Caco-2 (cell line): ENCODE measurements at regions of chr2 and their contacts with region 1.

Region 1: GRCh38 chr2:86440631-86441391 is at the start of gene KDM3A:
- DNase-seq: peak; percentile 100
- H3K4me3 ChIP-seq: peak within 1 kb of the TSS; percentile 99
- H3K4me3 Mint-ChIP-seq: peak within 1 kb of the TSS; percentile 83
- H3K27ac Mint-ChIP-seq: peak within 1 kb of the TSS; percentile 96
- H3K4me1 ChIP-seq: no peaks in the 10 kb centered on the region
- H3K4me1 Mint-ChIP-seq: peaks cover 18% of the 10 kb centered on the region
- H3K27me3 ChIP-seq: no peaks in the 10 kb centered on the region
- H3K27me3 Mint-ChIP-seq: peaks cover 8% of the 10 kb centered on the region
- CTCF ChIP-seq: no peak
- total RNA-seq, gene KDM3A: 47.4 and 52.4 TPM in 2 replicates

Region 2: GRCh38 chr2:86195055-86195807 is 245.6 kb before region 1 on chr2 and contains the start of gene IMMT:
- CTCF ChIA-PET with region 1: no interaction called
- POLR2A ChIA-PET with region 1: interaction called, 9 read pairs
- intact Hi-C with region 1: loop called (anchors 10 kb)
- DNase-seq: peak; percentile 98
- H3K4me3 ChIP-seq: peak within 1 kb of the TSS; percentile 68
- H3K4me3 Mint-ChIP-seq: peak within 1 kb of the TSS; percentile 84
- H3K27ac Mint-ChIP-seq: peak within 1 kb of the TSS; percentile 81
- H3K4me1 ChIP-seq: peaks cover 9% of the 10 kb centered on the region; the same call in 1 of the 2 replicates
- H3K4me1 Mint-ChIP-seq: peaks cover 27% of the 10 kb centered on the region
- H3K27me3 ChIP-seq: no peaks in the 10 kb centered on the region
- H3K27me3 Mint-ChIP-seq: no peaks in the 10 kb centered on the region
- CTCF ChIP-seq: no peak
- total RNA-seq, gene IMMT: 125 and 129 TPM in 2 replicates

Region 3: GRCh38 chr2:86562922-86563649 is 122.3 kb after region 1 on chr2 and contains the start of gene CHMP3:
- CTCF ChIA-PET with region 1: no interaction called
- POLR2A ChIA-PET with region 1: interaction called, 6 read pairs
- intact Hi-C with region 1: loop called (anchors 1 kb)
- DNase-seq: peak; percentile 98
- H3K4me3 ChIP-seq: peak within 1 kb of the TSS; percentile 81
- H3K4me3 Mint-ChIP-seq: peak within 1 kb of the TSS; percentile 97
- H3K27ac Mint-ChIP-seq: peak within 1 kb of the TSS; percentile 98
- H3K4me1 ChIP-seq: peaks cover 13% of the 10 kb centered on the region
- H3K4me1 Mint-ChIP-seq: peaks cover 16% of the 10 kb centered on the region
- H3K27me3 ChIP-seq: no peaks in the 10 kb centered on the region
- H3K27me3 Mint-ChIP-seq: no peaks in the 10 kb centered on the region
- CTCF ChIP-seq: no peak
- total RNA-seq, gene CHMP3: 93.3 and 93.5 TPM in 2 replicates

Region 4: GRCh38 chr2:88144914-88145497 is 1704.2 kb after region 1 on chr2:
- CTCF ChIA-PET with region 1: no interaction called
- POLR2A ChIA-PET with region 1: interaction called, 11 read pairs
- intact Hi-C with region 1: no loop called
- DNase-seq: no peak
- H3K4me3 ChIP-seq: no peak overlapping the region
- H3K4me3 Mint-ChIP-seq: no peak overlapping the region
- H3K27ac Mint-ChIP-seq: no peak overlapping the region
- H3K4me1 ChIP-seq: peaks cover 33% of the 10 kb centered on the region
- H3K4me1 Mint-ChIP-seq: peaks cover 20% of the 10 kb centered on the region
- H3K27me3 ChIP-seq: no peaks in the 10 kb centered on the region
- H3K27me3 Mint-ChIP-seq: no peaks in the 10 kb centered on the region
- CTCF ChIP-seq: no peak